A549 (cell line): ENCODE measurements at regions of chr17 and their contacts with region 1.

Region 1: GRCh38 chr17:47949136-47949759 is 7.9 kb downstream of the PNPO start:
- DNase-seq: peak; percentile 80 to 85
- ATAC-seq: peak; percentile 71 to 88
- H3K4me3 ChIP-seq: peak overlapping the region; percentile 5; the same call in 1 of the 3 replicates
- H3K27ac ChIP-seq: peak overlapping the region; percentile 77 to 87
- H3K4me1 ChIP-seq: peaks cover 48% of the 10 kb centered on the region
- CTCF ChIP-seq: peak; percentile 99
- EP300 ChIP-seq: no peak
- POLR2A ChIP-seq: no peak
- RAD21 ChIP-seq: peak; percentile 96 to 97

Region 2: GRCh38 chr17:47633996-47634395 is 315.3 kb before region 1 on chr17:
- CTCF ChIA-PET with region 1: no interaction called
- POLR2A ChIA-PET with region 1: no interaction called
- DNase-seq: no peak
- ATAC-seq: no peak
- H3K4me3 ChIP-seq: no peak overlapping the region
- H3K27ac ChIP-seq: no peak overlapping the region
- H3K4me1 ChIP-seq: no peaks in the 10 kb centered on the region
- CTCF ChIP-seq: no peak
- EP300 ChIP-seq: no peak
- POLR2A ChIP-seq: no peak
- RAD21 ChIP-seq: no peak

Region 3: GRCh38 chr17:47850692-47851573 is 98.3 kb before region 1 on chr17 and contains the start of gene SP6:
- CTCF ChIA-PET with region 1: interaction called, 11 read pairs
- POLR2A ChIA-PET with region 1: no interaction called
- DNase-seq: peak; percentile 76 to 91
- ATAC-seq: peak; percentile 90 to 95
- H3K4me3 ChIP-seq: peak within 1 kb of the TSS; percentile 50
- H3K27ac ChIP-seq: peak within 1 kb of the TSS; percentile 74 to 91
- H3K4me1 ChIP-seq: peaks cover 16% of the 10 kb centered on the region
- CTCF ChIP-seq: peak; percentile 27; the same call in 2 of the 3 replicates
- EP300 ChIP-seq: no peak
- POLR2A ChIP-seq: peak; percentile 74
- RAD21 ChIP-seq: peak in 1 of 2 experiments; percentile 31; a peak in 1 of 5 replicates
- polyA plus RNA-seq, gene SP6: 0.61 and 0.67 TPM in 2 replicates

Region 4: DNA sequence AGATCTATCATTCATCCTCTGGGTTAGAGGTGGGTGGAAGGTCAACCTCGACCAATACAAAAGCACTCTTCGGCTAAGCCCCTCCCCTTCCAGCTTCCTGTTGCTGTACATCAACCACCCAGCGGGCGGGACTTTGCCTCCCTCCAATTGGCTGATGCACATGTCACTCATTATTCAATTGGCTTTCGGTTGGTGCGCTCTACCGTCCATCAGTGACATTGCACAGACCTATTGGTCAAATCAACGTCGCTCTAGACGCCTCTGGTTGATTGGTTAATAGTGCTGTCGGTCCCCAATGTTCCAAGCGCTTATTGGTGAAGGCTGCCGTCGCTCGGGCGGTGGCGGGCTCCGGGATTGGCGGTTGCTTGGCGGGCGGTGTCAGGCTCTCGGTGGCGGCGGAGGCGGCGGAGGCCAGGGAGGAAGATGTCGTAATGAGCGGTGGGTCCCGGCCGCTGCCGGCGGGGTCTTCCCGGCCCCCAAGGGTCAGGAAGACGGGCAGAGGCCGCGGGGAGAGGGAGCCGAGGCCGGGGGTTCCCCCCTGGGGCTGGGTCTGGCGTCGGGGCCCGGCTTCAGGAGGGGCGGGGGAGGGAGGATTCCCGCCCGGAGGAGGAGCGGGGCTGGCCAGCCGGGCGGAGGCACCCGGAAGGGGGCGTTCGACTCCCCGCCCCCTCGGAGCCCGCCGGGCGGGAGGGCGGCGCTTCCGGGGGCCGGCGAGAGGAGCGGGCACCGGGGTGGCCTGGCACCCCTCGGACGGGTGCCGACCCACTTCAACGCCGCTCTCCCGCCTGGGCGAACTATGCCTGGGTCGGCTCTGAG is 53.2 kb before region 1 on chr17 and contains the start of gene SP2:
- CTCF ChIA-PET with region 1: interaction called, 46 read pairs
- POLR2A ChIA-PET with region 1: interaction called, 12 read pairs
- DNase-seq: peak; percentile 100
- ATAC-seq: peak; percentile 88 to 95
- H3K4me3 ChIP-seq: peak within 1 kb of the TSS; percentile 86
- H3K27ac ChIP-seq: peak within 1 kb of the TSS; percentile 95 to 96
- H3K4me1 ChIP-seq: peaks cover 16% of the 10 kb centered on the region; the same call in 2 of the 3 replicates
- CTCF ChIP-seq: no peak
- EP300 ChIP-seq: no peak
- POLR2A ChIP-seq: peak; percentile 91
- RAD21 ChIP-seq: no peak
- polyA plus RNA-seq, gene SP2: 6.2 and 8.0 TPM in 2 replicates

Region 5: DNA sequence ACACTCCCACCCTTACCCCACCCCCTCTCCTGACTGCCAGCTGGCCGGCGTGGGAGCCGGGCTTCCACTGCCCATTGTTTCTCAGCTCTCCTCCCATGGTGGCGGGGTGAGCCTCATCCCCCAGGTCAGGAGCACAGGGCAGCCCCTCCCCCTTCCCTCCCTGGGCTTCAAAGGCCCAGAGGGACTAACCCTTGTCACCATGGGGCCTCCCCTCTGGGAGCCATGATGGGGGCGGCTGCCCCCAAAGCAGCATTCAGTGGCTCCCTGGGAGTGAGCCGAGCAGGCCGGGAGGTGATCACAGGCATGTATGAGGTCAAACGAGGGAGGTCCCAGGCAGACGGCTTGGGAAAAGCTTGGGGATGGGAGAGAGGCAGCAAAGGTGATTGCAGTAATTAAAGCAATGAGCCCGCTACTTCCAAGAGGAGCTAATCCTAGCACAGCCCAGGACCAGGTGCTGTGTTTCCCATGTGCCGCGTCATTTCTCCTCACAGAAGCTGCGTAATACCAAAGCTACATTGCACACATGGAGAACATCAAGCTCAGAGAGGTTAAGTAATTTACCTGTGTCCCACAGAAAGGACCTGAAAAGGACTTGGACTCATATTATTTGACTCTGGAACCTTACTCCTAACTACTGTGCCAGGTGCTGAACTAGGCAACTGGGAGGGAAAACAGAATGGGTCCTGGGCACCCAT is 46.1 kb after region 1 on chr17:
- CTCF ChIA-PET with region 1: interaction called, 1,426 read pairs
- POLR2A ChIA-PET with region 1: no interaction called
- DNase-seq: no peak
- ATAC-seq: no peak
- H3K4me3 ChIP-seq: no peak overlapping the region
- H3K27ac ChIP-seq: no peak overlapping the region
- H3K4me1 ChIP-seq: no peaks in the 10 kb centered on the region
- CTCF ChIP-seq: no peak
- EP300 ChIP-seq: no peak
- POLR2A ChIP-seq: no peak
- RAD21 ChIP-seq: no peak

Region 6: GRCh38 chr17:48030531-48030930 is 81.3 kb after region 1 on chr17:
- CTCF ChIA-PET with region 1: interaction called, 10 read pairs
- POLR2A ChIA-PET with region 1: no interaction called
- DNase-seq: no peak
- ATAC-seq: no peak
- H3K4me3 ChIP-seq: no peak overlapping the region
- H3K27ac ChIP-seq: no peak overlapping the region
- H3K4me1 ChIP-seq: peaks cover 14% of the 10 kb centered on the region
- CTCF ChIP-seq: no peak
- EP300 ChIP-seq: no peak
- POLR2A ChIP-seq: no peak
- RAD21 ChIP-seq: no peak

Region 7: GRCh38 chr17:48127356-48128051 is 178.3 kb after region 1 on chr17:
- CTCF ChIA-PET with region 1: no interaction called
- POLR2A ChIA-PET with region 1: no interaction called
- DNase-seq: peak; percentile 61 to 81
- ATAC-seq: peak; percentile 70
- H3K4me3 ChIP-seq: no peak overlapping the region
- H3K27ac ChIP-seq: peak overlapping the region; percentile 17 to 55; a peak in 4 of 6 replicates
- H3K4me1 ChIP-seq: peaks cover 12% of the 10 kb centered on the region
- CTCF ChIP-seq: no peak
- EP300 ChIP-seq: no peak
- POLR2A ChIP-seq: no peak
- RAD21 ChIP-seq: no peak